Ascending aorta (tissue), 2 donors: ENCODE measurements at regions of chr6 and their contacts with region 1.

Region 1: GRCh38 chr6:5260661-5261544 is at the starts of genes FARS2 and LYRM4:
- DNase-seq: peak; percentile 49 to 91
- H3K4me3 ChIP-seq: peak within 1 kb of the TSS; percentile 92 to 99
- H3K27ac ChIP-seq: peak within 1 kb of the TSS; percentile 98
- H3K4me1 ChIP-seq: peaks cover 0 to 11% of the 10 kb centered on the region in 2 donors
- H3K27me3 ChIP-seq: no peaks in the 10 kb centered on the region
- CTCF ChIP-seq: no peak
- total RNA-seq, gene FARS2: 17.6 TPM
- total RNA-seq, gene LYRM4: 10.5 TPM

Region 2: GRCh38 chr6:3356056-3356761 is 1904.7 kb before region 1 on chr6:
- intact Hi-C with region 1: loop called (anchors 10 kb)
- DNase-seq: peak; percentile 27 to 88
- H3K4me3 ChIP-seq: peak overlapping the region; percentile 37 to 59
- H3K27ac ChIP-seq: peak overlapping the region; percentile 86 to 89
- H3K4me1 ChIP-seq: peaks cover 3 to 7% of the 10 kb centered on the region in 2 donors
- H3K27me3 ChIP-seq: no peaks in the 10 kb centered on the region
- CTCF ChIP-seq: no peak

Region 3: DNA sequence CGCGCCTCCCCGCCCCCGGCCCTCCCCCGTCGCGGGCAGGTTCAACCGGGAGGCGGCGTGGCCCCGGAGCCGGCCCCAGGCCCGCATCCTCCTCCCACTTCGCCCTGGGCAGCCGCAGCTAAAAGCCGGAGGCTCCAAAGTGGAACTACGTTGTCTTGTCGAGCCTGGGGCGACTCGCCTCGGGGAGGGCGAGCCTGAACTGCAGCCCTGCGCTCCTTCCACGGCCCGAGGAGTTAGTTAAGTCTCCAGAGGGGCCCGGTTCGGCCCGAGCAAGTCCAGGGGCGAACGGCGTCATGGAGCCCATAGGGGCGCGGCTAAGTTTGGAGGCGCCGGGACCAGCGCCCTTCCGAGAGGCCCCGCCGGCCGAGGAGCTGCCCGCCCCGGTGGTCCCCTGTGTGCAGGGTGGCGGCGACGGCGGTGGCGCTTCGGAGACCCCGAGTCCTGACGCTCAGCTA is 175.7 kb before region 1 on chr6 and contains the start of gene PPP1R3G:
- intact Hi-C with region 1: loop called (anchors 5 kb)
- DNase-seq: no peak
- H3K4me3 ChIP-seq: peak within 1 kb of the TSS; percentile 70 to 73
- H3K27ac ChIP-seq: peak within 1 kb of the TSS; percentile 71 to 79
- H3K4me1 ChIP-seq: peaks cover 0 to 7% of the 10 kb centered on the region in 2 donors
- H3K27me3 ChIP-seq: no peaks in the 10 kb centered on the region
- CTCF ChIP-seq: no peak
- total RNA-seq, gene PPP1R3G: 1.1 TPM

Region 4: DNA sequence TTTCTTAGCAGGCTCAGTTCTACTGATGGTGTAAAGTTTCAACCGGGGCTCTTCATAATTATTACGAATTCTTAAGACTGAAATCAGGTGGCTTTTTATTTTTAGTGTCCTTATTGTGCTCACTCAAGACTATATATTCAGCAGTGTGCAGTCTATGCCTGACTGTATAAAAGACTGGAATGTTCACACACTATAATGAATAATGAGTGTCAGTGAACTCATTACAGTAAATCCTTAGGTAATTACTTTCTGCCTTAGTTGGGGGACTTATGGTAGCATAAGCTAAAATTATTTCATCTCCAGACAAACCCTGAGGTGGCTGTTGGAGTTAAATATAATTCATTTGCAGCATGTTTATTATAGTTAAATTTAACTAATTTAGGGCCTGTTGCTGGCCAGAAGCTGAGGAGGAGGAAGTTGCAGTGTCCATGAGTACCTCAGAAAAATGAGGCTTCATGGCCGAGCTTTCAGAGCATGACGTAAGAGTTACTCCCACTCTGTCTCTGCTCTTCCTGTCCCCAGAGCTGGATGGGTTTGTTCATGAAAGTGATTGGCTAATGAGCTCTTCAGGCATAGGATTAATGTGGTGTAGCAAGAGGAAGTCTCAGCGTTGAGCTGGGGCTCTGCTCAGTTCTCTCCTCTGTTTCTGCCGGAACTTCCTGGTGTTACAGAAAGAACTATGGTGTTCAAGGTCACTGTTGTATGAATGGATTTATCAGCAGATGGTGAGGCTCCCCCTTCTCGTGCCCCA is 410.1 kb after region 1 on chr6:
- intact Hi-C with region 1: loop called (anchors 2 kb)
- DNase-seq: no peak
- H3K4me3 ChIP-seq: no peak overlapping the region
- H3K27ac ChIP-seq: peak overlapping the region; percentile 74 to 80
- H3K4me1 ChIP-seq: peaks cover 12 to 15% of the 10 kb centered on the region in 2 donors
- H3K27me3 ChIP-seq: no peaks in the 10 kb centered on the region
- CTCF ChIP-seq: no peak

Region 5: GRCh38 chr6:5995949-5996713 is 735.2 kb after region 1 on chr6:
- intact Hi-C with region 1: loop called (anchors 10 kb)
- DNase-seq: no peak
- H3K4me3 ChIP-seq: peak overlapping the region; percentile 58 to 61
- H3K27ac ChIP-seq: peak overlapping the region in 1 of 2 donors; percentile 31
- H3K4me1 ChIP-seq: peaks cover 5 to 17% of the 10 kb centered on the region in 2 donors
- H3K27me3 ChIP-seq: peaks cover 41% of the 10 kb centered on the region
- CTCF ChIP-seq: peak in 2 of 3 experiments; percentile 15 to 16